Endothelial cell of umbilical vein (primary cell): ENCODE measurements at regions of chr14 and their contacts with region 1.

Region 1: DNA sequence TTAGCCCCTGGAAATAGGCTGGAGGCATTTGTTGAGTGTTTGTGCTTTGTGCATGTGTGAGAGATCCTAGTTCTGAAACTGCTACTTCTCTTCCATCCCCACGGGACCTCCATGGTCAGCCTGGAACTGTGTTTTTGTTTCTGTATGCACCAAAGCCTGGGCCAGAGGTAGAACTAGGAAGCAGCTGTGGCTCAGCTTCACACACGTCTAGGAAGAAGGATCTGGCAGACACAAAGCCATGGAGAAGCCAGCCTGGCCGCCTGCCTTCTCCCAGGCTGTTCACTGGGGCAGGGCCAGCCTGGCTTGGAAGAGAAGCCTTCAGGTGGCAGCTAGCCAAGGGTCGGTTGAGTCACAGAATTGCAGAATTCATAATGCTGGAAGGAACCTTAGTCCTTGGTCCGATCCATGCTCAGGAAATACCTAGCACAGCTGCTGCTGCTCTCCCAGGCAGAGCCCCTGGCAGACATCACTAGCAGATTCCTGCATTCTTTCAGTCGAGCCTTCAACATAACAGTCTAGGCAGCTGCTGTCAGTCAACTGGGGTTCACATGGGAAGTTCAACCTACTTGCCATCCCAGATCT is 27.0 kb downstream of the RIN3 start:
- DNase-seq: peak; percentile 99
- H3K4me3 ChIP-seq: no peak overlapping the region
- H3K27ac ChIP-seq: peak overlapping the region; percentile 98
- H3K4me1 ChIP-seq: peaks cover 24% of the 10 kb centered on the region
- H3K27me3 ChIP-seq: no peaks in the 10 kb centered on the region
- CTCF ChIP-seq: no peak
- POLR2A ChIP-seq: peak; percentile 72

Region 2: DNA sequence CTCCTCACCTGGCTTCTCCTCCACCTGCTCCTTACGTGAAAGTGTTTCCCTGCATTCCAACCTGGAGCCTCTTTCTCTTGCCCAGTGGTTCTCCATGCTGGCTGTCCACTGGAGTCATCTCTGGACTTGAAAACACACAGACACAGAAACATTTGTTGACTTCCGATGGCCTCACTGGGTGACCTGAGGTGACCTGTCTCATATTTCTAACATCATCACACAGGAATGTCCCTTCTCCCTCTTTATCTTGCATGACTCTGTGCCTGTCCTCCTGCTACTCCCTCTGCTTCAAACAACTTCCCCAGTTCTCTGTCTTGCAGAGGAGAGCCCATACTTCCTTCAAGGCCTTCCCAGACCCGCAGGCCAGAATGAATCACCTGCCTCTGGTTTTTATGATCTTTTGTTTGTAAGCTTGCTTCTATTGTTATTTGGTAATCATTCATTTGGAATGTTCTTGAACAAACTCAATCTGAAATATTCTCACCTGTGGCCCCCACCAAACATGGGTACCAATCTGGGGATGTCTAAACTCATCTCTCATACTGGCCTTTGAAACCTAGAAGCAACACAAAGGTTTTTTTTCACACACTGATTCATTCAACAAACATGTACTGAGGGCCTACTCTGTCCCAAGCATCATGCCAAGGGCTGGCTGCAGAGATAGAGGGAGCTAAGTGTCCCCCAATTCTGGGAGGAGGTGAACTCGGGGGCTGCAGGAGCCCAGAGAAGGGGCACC is 36.6 kb before region 1 on chr14:
- CTCF ChIA-PET with region 1: no interaction called
- POLR2A ChIA-PET with region 1: no interaction called
- dilution Hi-C with region 1: no loop called
- intact Hi-C with region 1: no loop called
- DNase-seq: peak; percentile 16
- H3K4me3 ChIP-seq: no peak overlapping the region
- H3K27ac ChIP-seq: no peak overlapping the region
- H3K4me1 ChIP-seq: peaks cover 5% of the 10 kb centered on the region
- H3K27me3 ChIP-seq: peaks cover 0 to 2% of the 10 kb centered on the region in 2 experiments
- CTCF ChIP-seq: no peak
- POLR2A ChIP-seq: no peak

Region 3: DNA sequence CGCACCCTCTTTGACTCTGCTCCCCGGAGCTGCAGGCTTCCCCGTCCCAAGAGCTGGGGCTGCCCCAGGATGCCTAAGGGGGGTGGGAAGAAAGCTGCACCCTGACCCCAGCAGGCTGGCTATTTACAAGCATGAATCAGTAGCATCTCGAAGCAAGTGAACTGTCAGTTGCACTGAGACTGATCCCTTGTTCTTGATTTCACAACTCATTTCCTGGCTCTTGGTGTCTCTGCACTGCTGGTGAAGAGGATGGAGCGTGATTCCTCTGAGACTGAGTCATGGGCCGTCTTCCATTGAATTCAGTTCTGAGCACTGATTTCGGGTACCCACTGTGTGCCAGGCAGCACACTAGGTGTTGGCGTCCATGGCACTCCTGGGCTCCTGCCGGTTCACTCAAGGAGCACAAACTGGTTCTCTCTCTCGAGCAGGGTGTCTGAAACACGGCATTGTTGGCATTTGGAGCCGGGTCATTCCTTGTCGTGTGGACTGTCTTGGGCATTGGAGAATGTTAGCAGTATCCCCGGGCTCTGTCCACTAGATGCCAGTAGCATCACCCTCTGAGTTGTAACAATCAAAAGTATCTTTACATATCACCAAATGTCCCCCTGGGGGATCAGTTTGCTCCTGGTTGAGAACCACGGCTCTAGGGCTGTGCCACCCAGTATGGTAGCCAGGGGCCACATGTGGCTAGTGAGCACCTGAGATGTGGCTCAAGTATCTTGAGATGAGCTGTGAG is 59.9 kb after region 1 on chr14:
- CTCF ChIA-PET with region 1: no interaction called
- POLR2A ChIA-PET with region 1: no interaction called
- dilution Hi-C with region 1: no loop called
- intact Hi-C with region 1: no loop called
- DNase-seq: no peak
- H3K4me3 ChIP-seq: no peak overlapping the region
- H3K27ac ChIP-seq: no peak overlapping the region
- H3K4me1 ChIP-seq: no peaks in the 10 kb centered on the region
- H3K27me3 ChIP-seq: no peaks in the 10 kb centered on the region
- CTCF ChIP-seq: no peak
- POLR2A ChIP-seq: no peak

Region 4: GRCh38 chr14:92610849-92611271 is 70.3 kb after region 1 on chr14:
- CTCF ChIA-PET with region 1: no interaction called
- POLR2A ChIA-PET with region 1: no interaction called
- dilution Hi-C with region 1: no loop called
- intact Hi-C with region 1: loop called (anchors 1 kb)
- DNase-seq: peak; percentile 52
- H3K4me3 ChIP-seq: no peak overlapping the region
- H3K27ac ChIP-seq: peak overlapping the region; percentile 70
- H3K4me1 ChIP-seq: peaks cover 6% of the 10 kb centered on the region
- H3K27me3 ChIP-seq: no peaks in the 10 kb centered on the region
- CTCF ChIP-seq: no peak
- POLR2A ChIP-seq: no peak